Mammary epithelial cell (primary cell): ENCODE measurements at regions of chr11 and their contacts with region 1.

Region 1: DNA sequence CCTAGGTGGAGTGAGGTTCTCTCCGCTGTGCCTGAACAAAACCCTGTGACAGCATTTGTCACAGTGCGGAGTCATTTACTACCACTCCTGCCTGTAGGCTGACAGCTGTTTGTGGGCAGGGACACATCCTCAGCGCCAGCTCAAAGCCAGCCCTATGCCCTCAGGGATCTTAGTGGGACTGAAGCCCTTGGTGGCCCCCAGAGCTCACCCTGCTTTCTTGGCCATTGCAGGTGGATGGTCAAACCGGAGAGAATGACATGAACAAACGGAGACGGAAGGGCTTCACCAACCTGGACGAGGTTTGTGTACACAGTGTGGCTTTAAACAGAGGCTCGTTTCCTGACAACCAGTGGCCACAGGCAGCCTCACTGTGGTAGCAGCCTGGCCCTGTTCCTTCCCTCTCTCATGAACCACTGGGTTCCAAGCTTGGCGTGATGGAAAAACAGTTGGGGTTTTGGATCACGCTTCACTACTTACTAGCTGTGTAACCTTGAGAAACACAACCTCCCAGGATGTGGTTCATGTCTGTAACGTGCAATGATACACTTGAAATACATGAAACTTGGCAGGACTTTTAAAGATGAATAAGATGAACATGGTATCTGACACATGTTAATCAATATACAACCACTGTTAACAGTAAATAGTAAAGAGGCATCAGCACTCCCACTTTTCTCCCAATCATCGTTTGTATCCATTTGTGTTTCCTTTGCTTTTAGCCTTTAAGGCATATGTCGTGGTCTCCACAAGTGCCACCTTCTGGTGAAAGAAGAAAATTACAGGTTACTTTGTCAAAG is 125.8 kb downstream of the MICAL2 start:
- DNase-seq: peak; percentile 47
- H3K4me3 ChIP-seq: no peak overlapping the region
- H3K27ac ChIP-seq: peak overlapping the region; percentile 24
- H3K4me1 ChIP-seq: peaks cover 33% of the 10 kb centered on the region
- H3K27me3 ChIP-seq: no peaks in the 10 kb centered on the region
- CTCF ChIP-seq: peak; percentile 57 to 66

Region 2: DNA sequence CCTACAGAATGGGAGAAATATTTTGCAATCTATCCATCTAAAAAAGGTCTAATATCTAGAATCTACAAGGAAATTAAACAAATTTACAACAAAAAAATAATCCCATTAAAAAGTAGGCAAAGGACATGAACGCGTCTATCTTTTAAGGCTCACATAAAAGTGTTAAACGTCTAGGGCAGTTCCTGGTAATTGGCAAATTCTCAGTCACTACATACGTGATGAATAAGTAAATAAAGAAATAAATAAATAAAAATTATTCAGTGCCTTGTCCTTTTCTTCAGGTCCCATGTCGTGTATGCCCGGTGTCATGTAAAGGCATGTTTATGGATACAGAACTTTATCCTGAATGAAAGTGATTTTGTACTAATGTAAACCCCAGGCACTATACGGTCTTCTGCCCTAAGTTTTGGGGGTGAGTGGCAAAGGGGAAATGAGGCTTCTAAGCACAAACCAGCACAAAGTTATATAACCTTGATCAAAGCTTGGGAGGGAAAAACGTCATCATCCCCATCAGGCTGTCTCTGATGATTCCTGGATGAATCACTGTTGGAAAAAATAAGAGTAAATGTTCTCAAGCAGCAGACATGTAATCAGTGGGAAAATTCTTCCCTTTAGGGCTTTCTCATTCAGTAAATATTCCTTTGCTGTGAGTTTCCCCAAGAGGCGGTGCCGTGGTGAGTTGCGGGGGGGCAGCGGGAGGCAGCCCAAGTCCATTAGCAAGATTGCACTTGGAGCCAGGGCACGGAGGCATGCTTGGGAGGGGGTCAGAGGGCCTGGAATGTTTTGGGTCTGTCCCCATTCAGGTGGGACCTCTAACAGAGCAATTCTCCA is 156.2 kb before region 1 on chr11:
- CTCF ChIA-PET with region 1: no interaction called
- dilution Hi-C with region 1: loop called (anchors 5 kb)
- in situ Hi-C with region 1: no loop called
- intact Hi-C with region 1: no loop called
- DNase-seq: peak; percentile 98
- H3K4me3 ChIP-seq: no peak overlapping the region
- H3K27ac ChIP-seq: peak overlapping the region; percentile 99
- H3K4me1 ChIP-seq: peaks cover 41% of the 10 kb centered on the region
- H3K27me3 ChIP-seq: no peaks in the 10 kb centered on the region
- CTCF ChIP-seq: no peak

Region 3: DNA sequence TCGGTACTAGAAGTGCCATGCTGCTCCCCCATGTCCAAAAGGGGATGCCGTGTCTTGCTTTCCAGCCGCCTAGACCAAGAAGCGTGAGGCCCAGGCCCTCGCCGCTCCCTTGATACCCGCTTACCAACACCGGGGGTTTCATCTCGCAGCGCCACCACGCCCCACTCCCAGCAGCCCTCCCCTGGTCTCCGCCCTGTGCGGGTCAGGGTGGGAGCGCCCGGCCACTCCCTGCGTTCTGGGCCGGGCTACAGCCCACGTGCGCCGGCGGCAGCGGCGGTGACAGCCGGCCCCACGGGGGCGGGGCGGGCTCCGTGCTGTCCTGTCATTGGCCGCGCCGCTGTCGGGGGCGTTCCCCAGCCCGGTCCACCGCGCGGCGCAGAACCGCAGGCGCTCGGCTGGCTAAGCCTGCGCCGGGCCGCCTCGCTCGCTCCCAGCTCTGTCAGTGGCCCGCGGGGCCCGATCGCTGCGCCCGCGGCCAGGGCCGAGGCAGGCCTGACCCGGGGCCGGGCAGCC is 125.9 kb before region 1 on chr11 and contains the start of gene MICAL2:
- CTCF ChIA-PET with region 1: no interaction called
- dilution Hi-C with region 1: no loop called
- in situ Hi-C with region 1: no loop called
- intact Hi-C with region 1: loop called (anchors 5 kb)
- DNase-seq: peak; percentile 95
- H3K4me3 ChIP-seq: peak within 1 kb of the TSS; percentile 60 to 81 (median 76)
- H3K27ac ChIP-seq: peak within 1 kb of the TSS; percentile 95
- H3K4me1 ChIP-seq: peaks cover 37% of the 10 kb centered on the region
- H3K27me3 ChIP-seq: no peaks in the 10 kb centered on the region
- CTCF ChIP-seq: no peak
- total RNA-seq, gene MICAL2: 163 to 339 TPM

Region 4: DNA sequence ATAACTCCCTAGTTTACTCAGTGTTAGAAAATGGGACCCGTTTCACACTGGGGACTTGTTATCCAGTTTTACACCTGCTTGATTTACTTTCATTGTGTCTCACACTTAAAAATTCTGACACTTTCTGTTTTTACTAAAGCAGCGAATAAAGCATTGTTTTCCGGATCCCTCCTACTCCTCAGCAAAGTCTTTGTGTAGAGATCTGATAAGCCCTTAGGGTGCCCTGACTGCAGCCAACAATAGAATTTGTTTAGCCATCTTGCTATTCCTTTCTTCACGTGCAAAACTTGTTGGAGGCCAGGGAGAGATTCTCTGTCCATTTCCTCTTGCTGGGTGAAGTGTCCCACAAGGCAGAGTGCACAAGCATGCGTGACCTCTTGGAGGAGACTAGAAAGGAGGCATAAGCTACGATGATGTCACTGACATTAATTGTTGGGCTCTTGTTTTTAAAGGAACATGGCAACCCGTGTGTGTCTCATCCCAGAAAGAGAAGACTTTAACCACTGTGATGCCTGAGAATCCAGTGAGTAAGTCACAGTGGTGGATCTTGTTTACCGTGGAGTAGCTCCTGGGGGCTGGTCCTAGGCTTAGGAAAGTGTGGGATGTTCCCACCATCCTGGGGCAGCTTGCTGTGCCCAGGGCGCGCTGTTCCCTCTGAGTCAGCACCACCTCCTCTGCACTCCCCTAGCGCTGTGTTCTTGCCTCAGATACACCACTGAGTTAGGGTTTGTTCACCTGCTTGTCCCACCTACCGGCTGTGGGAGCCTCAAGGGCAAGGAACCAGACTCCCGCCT is 98.0 kb before region 1 on chr11:
- CTCF ChIA-PET with region 1: no interaction called
- dilution Hi-C with region 1: no loop called
- in situ Hi-C with region 1: loop called in 1 of 2 experiments (anchors 10 kb)
- intact Hi-C with region 1: no loop called
- DNase-seq: peak; percentile 97
- H3K4me3 ChIP-seq: no peak overlapping the region
- H3K27ac ChIP-seq: peak overlapping the region; percentile 84
- H3K4me1 ChIP-seq: peaks cover 51% of the 10 kb centered on the region
- H3K27me3 ChIP-seq: no peaks in the 10 kb centered on the region
- CTCF ChIP-seq: no peak

Region 5: GRCh38 chr11:12159351-12160099 is 76.6 kb before region 1 on chr11:
- CTCF ChIA-PET with region 1: interaction called, 3 read pairs
- dilution Hi-C with region 1: loop called (anchors 5 kb)
- in situ Hi-C with region 1: no loop called
- intact Hi-C with region 1: loop called (anchors 1 kb)
- DNase-seq: peak; percentile 57
- H3K4me3 ChIP-seq: no peak overlapping the region
- H3K27ac ChIP-seq: no peak overlapping the region
- H3K4me1 ChIP-seq: peaks cover 56% of the 10 kb centered on the region
- H3K27me3 ChIP-seq: no peaks in the 10 kb centered on the region
- CTCF ChIP-seq: peak in 1 of 2 donors; percentile 35

Region 6: GRCh38 chr11:12189543-12190235 is 46.5 kb before region 1 on chr11:
- CTCF ChIA-PET with region 1: no interaction called
- dilution Hi-C with region 1: no loop called
- in situ Hi-C with region 1: no loop called
- intact Hi-C with region 1: loop called (anchors 2 kb)
- DNase-seq: peak; percentile 97
- H3K4me3 ChIP-seq: peak overlapping the region in 1 of 3 experiments; percentile 19
- H3K27ac ChIP-seq: peak overlapping the region; percentile 94
- H3K4me1 ChIP-seq: peaks cover 49% of the 10 kb centered on the region
- H3K27me3 ChIP-seq: no peaks in the 10 kb centered on the region
- CTCF ChIP-seq: peak; percentile 20 to 61